Mammary epithelial cell (primary cell): ENCODE measurements at regions of chrX and their contacts with region 1.

Region 1: DNA sequence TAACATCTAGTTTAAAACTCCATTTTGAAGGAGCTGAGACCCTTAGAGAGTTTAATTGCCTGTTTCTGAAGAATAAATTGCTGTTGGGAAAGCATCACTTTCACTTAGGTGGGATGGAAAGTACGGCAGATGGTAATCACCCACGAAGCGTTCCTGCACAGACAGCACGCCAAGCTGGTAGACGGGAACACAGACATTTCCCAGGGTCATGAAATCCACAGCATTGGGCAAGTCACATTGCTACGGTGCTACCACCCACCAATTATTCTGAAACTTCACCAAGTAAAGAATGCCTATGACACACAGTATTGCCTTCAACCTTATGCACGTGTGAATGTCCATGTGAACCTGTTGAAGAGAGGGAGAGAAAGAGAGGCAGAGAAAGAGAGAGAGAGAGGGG is 1004.8 kb upstream of the PRKX start:
- DNase-seq: no peak
- H3K4me3 ChIP-seq: no peak overlapping the region
- H3K27ac ChIP-seq: no peak overlapping the region
- H3K4me1 ChIP-seq: no peaks in the 10 kb centered on the region
- H3K27me3 ChIP-seq: no peaks in the 10 kb centered on the region
- CTCF ChIP-seq: no peak

Region 2: GRCh38 chrX:4655748-4656147 is 62.5 kb before region 1 on chrX:
- CTCF ChIA-PET with region 1: no interaction called
- dilution Hi-C with region 1: loop called (anchors 5 kb)
- in situ Hi-C with region 1: no loop called
- intact Hi-C with region 1: no loop called
- DNase-seq: peak; percentile 78
- H3K4me3 ChIP-seq: no peak overlapping the region
- H3K27ac ChIP-seq: no peak overlapping the region
- H3K4me1 ChIP-seq: no peaks in the 10 kb centered on the region
- H3K27me3 ChIP-seq: no peaks in the 10 kb centered on the region
- CTCF ChIP-seq: no peak

Region 3: GRCh38 chrX:5068550-5068949 is 350.3 kb after region 1 on chrX:
- CTCF ChIA-PET with region 1: no interaction called
- dilution Hi-C with region 1: no loop called
- in situ Hi-C with region 1: no loop called
- intact Hi-C with region 1: no loop called
- DNase-seq: peak; percentile 19
- H3K4me3 ChIP-seq: no peak overlapping the region
- H3K27ac ChIP-seq: no peak overlapping the region
- H3K4me1 ChIP-seq: no peaks in the 10 kb centered on the region
- H3K27me3 ChIP-seq: no peaks in the 10 kb centered on the region
- CTCF ChIP-seq: no peak